ENCODE measurements at regions of chr3 and their contacts with region 1.

Region 1: GRCh38 chr3:99172736-99173657 is 271.5 kb upstream of the DCBLD2 start:
- H3K4me3 ChIP-seq: no peak overlapping the region
- H3K27ac ChIP-seq: no peak overlapping the region
- H3K4me1 ChIP-seq: no peaks in the 10 kb centered on the region
- CTCF ChIP-seq: peak; percentile 44; the same call in 1 of the 2 replicates

Region 2: GRCh38 chr3:99023590-99024192 is 149.3 kb before region 1 on chr3:
- CTCF ChIA-PET with region 1: interaction called, 29 read pairs
- POLR2A ChIA-PET with region 1: no interaction called
- H3K4me3 ChIP-seq: no peak overlapping the region
- H3K27ac ChIP-seq: no peak overlapping the region
- H3K4me1 ChIP-seq: no peaks in the 10 kb centered on the region
- CTCF ChIP-seq: no peak

Region 3: GRCh38 chr3:99071096-99071495 is 101.9 kb before region 1 on chr3:
- CTCF ChIA-PET with region 1: no interaction called
- POLR2A ChIA-PET with region 1: no interaction called
- H3K4me3 ChIP-seq: no peak overlapping the region
- H3K27ac ChIP-seq: no peak overlapping the region
- H3K4me1 ChIP-seq: no peaks in the 10 kb centered on the region
- CTCF ChIP-seq: no peak

Region 4: DNA sequence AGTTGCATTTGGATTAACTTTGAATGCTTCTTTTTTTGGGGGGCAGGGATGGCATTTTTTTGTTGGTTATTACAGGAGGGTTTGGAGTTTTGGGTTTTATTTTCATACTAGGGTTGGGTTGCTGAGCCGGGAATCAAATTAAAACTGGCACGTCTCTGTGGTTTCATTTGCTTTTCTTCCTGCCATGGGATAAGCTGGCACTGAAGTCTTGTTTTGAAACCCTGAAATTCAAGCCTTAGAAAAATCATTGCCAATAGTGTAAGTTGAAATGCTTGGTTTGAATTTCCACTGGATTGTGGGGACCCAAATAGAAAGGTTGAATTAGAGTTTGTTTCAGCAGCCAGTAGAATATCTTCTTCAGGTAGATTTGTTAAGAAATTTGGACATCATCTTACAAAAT is 78.4 kb before region 1 on chr3:
- CTCF ChIA-PET with region 1: no interaction called
- POLR2A ChIA-PET with region 1: no interaction called
- H3K4me3 ChIP-seq: no peak overlapping the region
- H3K27ac ChIP-seq: no peak overlapping the region
- H3K4me1 ChIP-seq: no peaks in the 10 kb centered on the region
- CTCF ChIP-seq: no peak